ENCODE measurements at regions of chr2 and their contacts with region 1.

Region 1: DNA sequence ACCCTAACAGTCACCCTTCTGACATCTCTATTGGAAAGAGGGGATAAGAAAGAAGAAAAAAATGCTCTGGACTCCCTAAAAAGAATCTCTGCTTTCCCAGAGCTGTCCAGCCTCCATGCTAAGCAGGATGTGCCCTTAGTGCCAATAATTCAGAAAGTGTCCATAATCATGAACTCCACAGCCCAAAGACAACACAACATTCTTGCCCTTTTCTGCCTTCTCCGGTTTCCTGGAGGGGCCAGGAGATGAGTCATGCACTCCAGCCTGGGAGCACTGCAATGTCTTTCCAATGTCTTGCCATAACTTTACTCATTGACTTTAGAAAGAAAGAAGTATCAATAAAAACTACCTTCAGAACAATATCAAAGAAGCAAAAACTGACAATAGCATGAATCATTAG is 44.0 kb downstream of the KLF7 start:
- DNase-seq: no peak
- H3K4me3 Mint-ChIP-seq: no peak overlapping the region
- H3K27ac Mint-ChIP-seq: peak overlapping the region; percentile 55
- H3K4me1 Mint-ChIP-seq: peaks cover 61% of the 10 kb centered on the region
- H3K27me3 Mint-ChIP-seq: no peaks in the 10 kb centered on the region

Region 2: DNA sequence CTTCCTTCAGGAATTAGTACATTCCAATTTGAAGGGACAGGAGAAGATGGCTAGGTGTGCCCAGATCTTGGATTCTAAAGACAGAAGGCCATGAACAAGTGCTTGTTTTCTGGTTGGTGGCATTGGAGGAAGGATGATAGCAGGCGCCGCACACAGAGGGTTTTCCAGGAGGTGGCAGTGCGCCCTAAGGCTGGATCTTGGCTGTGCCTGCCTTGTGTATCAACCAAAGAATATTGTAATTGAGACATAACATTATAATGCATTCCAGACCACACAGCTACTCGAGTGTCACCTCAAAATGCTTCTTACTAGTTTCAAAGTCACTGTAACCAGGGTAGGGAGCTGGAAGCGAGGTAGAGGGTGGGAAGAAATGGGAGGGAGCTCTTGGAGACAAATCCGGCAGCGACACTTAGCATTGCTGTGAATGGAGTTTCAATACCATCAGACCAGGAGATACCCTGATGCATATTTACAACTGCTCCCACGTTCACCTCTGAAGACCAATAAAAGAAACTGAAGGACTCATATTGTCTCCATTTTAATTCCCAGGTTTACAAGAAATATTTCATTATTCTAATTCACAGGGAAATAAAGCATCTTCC is 139.9 kb before region 1 on chr2:
- CTCF ChIA-PET with region 1: no interaction called
- POLR2A ChIA-PET with region 1: no interaction called
- intact Hi-C with region 1: loop called (anchors 10 kb)
- DNase-seq: peak; percentile 70
- H3K4me3 Mint-ChIP-seq: no peak overlapping the region
- H3K27ac Mint-ChIP-seq: no peak overlapping the region
- H3K4me1 Mint-ChIP-seq: peaks cover 5% of the 10 kb centered on the region
- H3K27me3 Mint-ChIP-seq: no peaks in the 10 kb centered on the region

Region 3: GRCh38 chr2:207073801-207074678 is 47.7 kb before region 1 on chr2:
- CTCF ChIA-PET with region 1: interaction called, 3 read pairs
- POLR2A ChIA-PET with region 1: interaction called, 4 read pairs
- intact Hi-C with region 1: loop called (anchors 1 kb)
- DNase-seq: peak; percentile 69
- H3K4me3 Mint-ChIP-seq: peak overlapping the region; percentile 41
- H3K27ac Mint-ChIP-seq: peak overlapping the region; percentile 85
- H3K4me1 Mint-ChIP-seq: peaks cover 27% of the 10 kb centered on the region
- H3K27me3 Mint-ChIP-seq: peaks cover 2% of the 10 kb centered on the region

Region 4: GRCh38 chr2:207135340-207135739 is 13.6 kb after region 1 on chr2:
- CTCF ChIA-PET with region 1: interaction called, 3 read pairs
- POLR2A ChIA-PET with region 1: interaction called, 3 read pairs
- intact Hi-C with region 1: loop called (anchors 1 kb)
- DNase-seq: no peak
- H3K4me3 Mint-ChIP-seq: no peak overlapping the region
- H3K27ac Mint-ChIP-seq: no peak overlapping the region
- H3K4me1 Mint-ChIP-seq: peaks cover 80% of the 10 kb centered on the region
- H3K27me3 Mint-ChIP-seq: no peaks in the 10 kb centered on the region

Region 5: DNA sequence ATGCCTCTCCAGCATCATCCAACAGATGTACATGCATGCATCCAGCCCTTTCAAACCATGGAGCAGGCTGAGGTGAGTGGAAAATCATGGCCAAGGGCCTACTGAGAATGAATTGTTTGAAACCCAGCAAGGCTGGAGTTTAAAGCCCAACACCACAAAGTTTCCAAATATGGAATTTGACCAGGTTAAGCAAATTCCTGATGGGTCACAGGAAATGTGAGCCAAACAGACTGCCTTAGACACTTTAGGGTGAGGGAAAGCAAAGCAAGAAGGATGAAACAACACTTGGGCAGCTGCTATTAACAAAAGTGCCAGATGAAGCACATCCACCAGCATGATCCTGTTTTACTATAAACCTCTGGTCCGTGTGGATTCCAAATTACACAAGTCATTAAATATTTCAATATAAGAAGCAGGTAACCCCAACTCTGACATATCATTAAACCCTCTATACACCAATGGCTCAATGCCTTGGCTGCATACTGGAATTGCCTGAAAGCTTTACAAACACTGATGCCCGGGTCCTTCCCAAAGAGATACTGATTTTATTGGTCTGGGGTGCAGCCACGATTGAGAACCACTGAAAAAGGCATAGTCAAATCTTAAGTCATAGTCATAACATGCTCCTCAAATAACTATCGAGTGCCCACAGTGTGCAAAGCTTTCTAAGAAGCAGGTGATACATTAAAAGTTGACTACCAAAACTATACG is 34.8 kb after region 1 on chr2:
- CTCF ChIA-PET with region 1: interaction called, 4 read pairs
- POLR2A ChIA-PET with region 1: interaction called, 3 read pairs
- intact Hi-C with region 1: loop called (anchors 1 kb)
- DNase-seq: peak; percentile 66
- H3K4me3 Mint-ChIP-seq: no peak overlapping the region
- H3K27ac Mint-ChIP-seq: peak overlapping the region; percentile 46
- H3K4me1 Mint-ChIP-seq: peaks cover 89% of the 10 kb centered on the region
- H3K27me3 Mint-ChIP-seq: no peaks in the 10 kb centered on the region

Region 6: DNA sequence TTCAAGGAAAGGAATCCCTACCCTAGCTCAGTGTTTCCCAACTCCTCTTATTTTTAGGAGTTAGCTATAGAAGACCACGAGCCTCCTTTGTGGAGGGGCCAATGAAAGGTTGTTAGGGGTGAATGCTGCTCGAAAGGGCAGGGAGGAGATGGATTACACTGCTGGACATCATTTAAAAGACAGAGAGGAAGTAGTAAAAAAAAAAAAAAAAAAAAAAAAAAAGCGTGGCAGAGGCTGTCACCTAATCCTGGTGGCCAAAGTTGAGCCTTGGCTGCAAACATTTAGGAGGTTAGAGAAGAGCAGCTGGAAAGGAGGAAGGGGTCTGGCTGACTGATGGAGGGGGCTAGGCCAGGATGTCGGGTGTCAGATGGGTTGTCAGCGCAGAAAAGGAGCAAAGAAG is 183.0 kb after region 1 on chr2:
- CTCF ChIA-PET with region 1: no interaction called
- POLR2A ChIA-PET with region 1: no interaction called
- intact Hi-C with region 1: no loop called
- DNase-seq: no peak
- H3K4me3 Mint-ChIP-seq: no peak overlapping the region
- H3K27ac Mint-ChIP-seq: no peak overlapping the region
- H3K4me1 Mint-ChIP-seq: peaks cover 9% of the 10 kb centered on the region
- H3K27me3 Mint-ChIP-seq: no peaks in the 10 kb centered on the region

Region 7: DNA sequence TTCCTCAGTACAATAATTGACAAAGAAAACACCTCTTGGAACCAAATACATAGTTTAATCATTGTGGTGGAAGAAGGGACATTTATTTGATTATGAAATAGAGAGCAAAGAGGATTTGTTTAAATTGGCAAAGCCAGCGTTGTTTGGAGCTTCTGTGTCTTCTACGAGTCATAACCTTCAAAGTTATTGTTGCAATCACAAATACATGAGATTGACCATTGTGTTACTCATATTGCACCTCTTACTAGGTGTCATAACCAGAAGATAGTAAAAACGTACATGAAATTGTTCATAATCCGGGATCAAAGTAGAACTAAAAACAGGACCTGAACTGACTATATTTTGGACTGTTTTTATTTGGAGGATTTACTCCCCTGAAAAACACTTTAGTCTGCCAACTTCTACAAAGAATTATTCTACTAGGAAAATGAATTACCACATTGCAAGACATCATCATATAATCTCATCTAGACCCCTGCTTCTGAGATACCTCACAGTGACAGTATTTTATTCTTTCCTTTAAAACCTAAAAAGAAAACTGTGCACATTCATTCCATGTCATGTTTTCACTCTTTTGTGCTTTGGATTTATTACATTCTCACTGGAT is 195.7 kb after region 1 on chr2:
- CTCF ChIA-PET with region 1: no interaction called
- POLR2A ChIA-PET with region 1: interaction called, 3 read pairs
- intact Hi-C with region 1: loop called (anchors 1 kb)
- DNase-seq: no peak
- H3K4me3 Mint-ChIP-seq: no peak overlapping the region
- H3K27ac Mint-ChIP-seq: peak overlapping the region; percentile 83
- H3K4me1 Mint-ChIP-seq: peaks cover 30% of the 10 kb centered on the region
- H3K27me3 Mint-ChIP-seq: peaks cover 3% of the 10 kb centered on the region